ENCODE measurements at regions of chr1 and their contacts with region 1.

Region 1: GRCh38 chr1:31938174-31938950 is at the start of gene PTP4A2:
- DNase-seq: peak; percentile 97 to 100 (median 98)
- ATAC-seq: peak; percentile 77
- H3K4me3 ChIP-seq: peak within 1 kb of the TSS; percentile 82
- H3K27ac ChIP-seq: peak within 1 kb of the TSS; percentile 94
- H3K4me1 ChIP-seq: peaks cover 46 to 53% of the 10 kb centered on the region in 2 experiments
- H3K27me3 ChIP-seq: no peaks in the 10 kb centered on the region
- CTCF ChIP-seq: peak in 2 of 3 experiments; percentile 79 to 82; a peak in 5 of 6 replicates
- EP300 ChIP-seq: peak; percentile 72; the same call in 1 of the 2 replicates
- POLR2A ChIP-seq: peak; percentile 71
- RAD21 ChIP-seq: peak in 1 of 2 experiments; percentile 37; a peak in 2 of 4 replicates
- polyA plus RNA-seq, gene PTP4A2: 197 to 480 TPM

Region 2: DNA sequence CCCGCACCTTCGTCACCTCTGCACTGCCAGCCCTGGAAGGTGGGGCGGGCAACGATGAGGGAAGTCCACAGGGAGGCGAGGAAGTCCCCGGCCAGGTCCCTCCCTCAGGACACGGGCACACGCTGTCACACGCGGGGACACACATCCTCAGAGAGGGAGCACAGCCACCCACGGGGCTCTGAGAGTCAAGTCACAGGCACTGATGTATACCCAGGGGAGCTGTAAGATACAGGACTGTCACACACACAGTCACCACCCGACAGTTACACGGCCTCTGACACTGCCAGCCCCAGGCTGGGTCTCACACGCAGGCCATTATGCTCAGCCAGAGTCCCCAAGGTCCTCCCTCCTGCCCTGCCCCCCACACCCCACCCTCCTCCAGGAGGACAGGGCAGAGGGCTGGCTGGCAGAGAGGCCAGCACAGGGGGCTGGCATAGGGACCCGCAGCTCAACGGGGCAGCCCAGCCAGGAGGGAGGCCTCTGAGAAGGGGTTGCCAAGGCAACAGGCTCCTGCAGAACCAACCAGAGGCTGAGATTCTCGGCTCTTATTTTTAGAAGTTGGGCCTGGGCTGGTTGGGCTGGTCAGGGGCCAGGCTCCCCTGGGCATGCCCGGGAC is 156.5 kb before region 1 on chr1:
- CTCF ChIA-PET with region 1: no interaction called
- POLR2A ChIA-PET with region 1: no interaction called
- in situ Hi-C with region 1: no loop called
- intact Hi-C with region 1: no loop called
- DNase-seq: peak in 1 of 4 experiments; percentile 45
- ATAC-seq: peak; percentile 19
- H3K4me3 ChIP-seq: no peak overlapping the region
- H3K27ac ChIP-seq: no peak overlapping the region
- H3K4me1 ChIP-seq: peaks cover 18 to 24% of the 10 kb centered on the region in 2 experiments
- H3K27me3 ChIP-seq: peaks cover 0 to 13% of the 10 kb centered on the region in 2 experiments; a peak in 2 of 5 replicates
- CTCF ChIP-seq: no peak
- EP300 ChIP-seq: no peak
- POLR2A ChIP-seq: no peak
- RAD21 ChIP-seq: no peak

Region 3: GRCh38 chr1:31815752-31816500 is 122.4 kb before region 1 on chr1 and contains the start of gene SPOCD1:
- CTCF ChIA-PET with region 1: no interaction called
- POLR2A ChIA-PET with region 1: interaction called, 3 read pairs
- in situ Hi-C with region 1: no loop called
- intact Hi-C with region 1: loop called (anchors 5 kb)
- DNase-seq: peak; percentile 97 to 99 (median 98)
- ATAC-seq: peak; percentile 96
- H3K4me3 ChIP-seq: peak within 1 kb of the TSS; percentile 27
- H3K27ac ChIP-seq: peak within 1 kb of the TSS; percentile 24; the same call in 1 of the 3 replicates
- H3K4me1 ChIP-seq: peaks cover 10 to 24% of the 10 kb centered on the region in 2 experiments; a peak in 4 of 5 replicates
- H3K27me3 ChIP-seq: no peaks in the 10 kb centered on the region
- CTCF ChIP-seq: peak; percentile 94 to 100 (median 98)
- EP300 ChIP-seq: no peak; the same call in 1 of the 2 replicates
- POLR2A ChIP-seq: peak; percentile 44; the same call in 1 of the 2 replicates
- RAD21 ChIP-seq: peak; percentile 92 to 96
- polyA plus RNA-seq, gene SPOCD1: 0.03 TPM in 1 of 2 experiments, not detected in the other

Region 4: DNA sequence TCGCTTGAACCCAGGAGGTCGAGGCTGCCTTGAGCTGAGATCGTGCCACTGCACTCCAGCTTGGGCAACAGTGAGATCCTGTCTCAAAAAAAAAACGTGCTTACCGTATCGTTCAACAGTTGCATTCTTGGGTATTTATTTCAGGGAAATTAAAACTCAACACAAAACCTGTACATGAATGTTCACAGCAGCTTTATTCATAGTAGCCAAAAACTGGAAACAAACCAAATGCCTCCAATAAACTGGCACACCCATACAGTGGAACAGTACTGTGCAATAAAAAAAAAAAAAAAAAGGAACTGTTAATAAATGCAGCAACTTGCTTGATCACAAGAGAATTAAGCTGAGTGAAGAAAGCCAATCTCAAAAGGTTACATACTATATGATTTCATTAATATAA is 82.0 kb after region 1 on chr1:
- CTCF ChIA-PET with region 1: no interaction called
- POLR2A ChIA-PET with region 1: interaction called, 5 read pairs
- in situ Hi-C with region 1: no loop called
- intact Hi-C with region 1: loop called (anchors 5 kb)
- DNase-seq: no peak
- ATAC-seq: no peak
- H3K4me3 ChIP-seq: no peak overlapping the region
- H3K27ac ChIP-seq: peak overlapping the region; percentile 50
- H3K4me1 ChIP-seq: peaks cover 41 to 67% of the 10 kb centered on the region in 2 experiments
- H3K27me3 ChIP-seq: no peaks in the 10 kb centered on the region
- CTCF ChIP-seq: no peak
- EP300 ChIP-seq: no peak
- POLR2A ChIP-seq: no peak
- RAD21 ChIP-seq: no peak

Region 5: GRCh38 chr1:32186077-32186476 is 247.7 kb after region 1 on chr1:
- CTCF ChIA-PET with region 1: no interaction called
- POLR2A ChIA-PET with region 1: no interaction called
- in situ Hi-C with region 1: no loop called
- intact Hi-C with region 1: no loop called
- DNase-seq: no peak
- ATAC-seq: peak; percentile 47
- H3K4me3 ChIP-seq: no peak overlapping the region
- H3K27ac ChIP-seq: peak overlapping the region; percentile 46; the same call in 2 of the 3 replicates
- H3K4me1 ChIP-seq: peaks cover 12 to 14% of the 10 kb centered on the region in 2 experiments
- H3K27me3 ChIP-seq: no peaks in the 10 kb centered on the region
- CTCF ChIP-seq: no peak
- EP300 ChIP-seq: no peak
- POLR2A ChIP-seq: no peak
- RAD21 ChIP-seq: no peak